GM12878 (cell line): ENCODE measurements at regions of chr22 and their contacts with region 1.

Region 1: DNA sequence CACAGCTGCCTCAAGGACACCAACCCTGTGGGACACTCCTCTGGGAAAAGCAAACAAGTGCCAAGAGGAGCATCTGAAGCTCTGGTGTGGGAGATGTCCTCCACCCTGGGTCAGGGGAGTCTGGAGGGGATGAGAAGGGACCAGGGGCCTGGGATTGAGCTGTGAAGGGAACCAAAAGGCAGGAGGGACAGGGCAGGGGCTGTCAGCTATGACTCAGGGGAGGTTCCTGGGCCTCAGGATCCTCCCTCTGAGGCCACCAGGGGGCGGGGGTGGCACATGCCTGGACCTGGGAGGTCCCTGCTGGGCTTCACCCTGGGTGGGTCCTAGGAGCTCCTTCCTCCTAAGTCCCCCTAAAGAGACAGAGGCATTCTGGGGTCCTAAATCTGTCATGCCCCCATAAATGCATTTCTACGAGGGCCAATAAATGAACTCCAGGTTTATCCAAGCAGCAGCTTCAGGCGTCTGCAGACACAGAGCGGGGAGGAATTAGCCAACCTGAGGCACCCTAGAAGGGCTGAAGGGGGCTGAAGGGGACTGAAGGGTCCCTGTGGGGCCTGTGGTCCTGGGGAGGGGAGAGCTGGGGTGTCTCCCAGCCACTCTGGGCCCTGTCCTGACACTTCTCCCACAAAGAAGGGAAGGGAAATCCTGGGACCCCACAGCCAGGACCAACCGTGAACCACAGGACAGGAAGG is 31.9 kb upstream of the IGLL5 start:
- DNase-seq: no peak
- ATAC-seq: peak; percentile 95
- H3K4me3 ChIP-seq: no peak overlapping the region
- H3K27ac ChIP-seq: peak overlapping the region; percentile 73
- H3K4me1 ChIP-seq: no peaks in the 10 kb centered on the region
- H3K27me3 ChIP-seq: no peaks in the 10 kb centered on the region
- CTCF ChIP-seq: peak; percentile 27 to 70 (median 60); a peak in 5 of 6 replicates
- EP300 ChIP-seq: no peak
- POLR2A ChIP-seq: no peak
- RAD21 ChIP-seq: no peak

Region 2: GRCh38 chr22:22779213-22779612 is 76.5 kb before region 1 on chr22:
- CTCF ChIA-PET with region 1: no interaction called
- POLR2A ChIA-PET with region 1: no interaction called
- RAD21 ChIA-PET with region 1: no interaction called
- SMC1A ChIA-PET with region 1: no interaction called
- in situ Hi-C with region 1: no loop called
- intact Hi-C with region 1: no loop called
- DNase-seq: no peak
- ATAC-seq: no peak
- H3K4me3 ChIP-seq: no peak overlapping the region
- H3K27ac ChIP-seq: no peak overlapping the region
- H3K4me1 ChIP-seq: no peaks in the 10 kb centered on the region
- H3K27me3 ChIP-seq: no peaks in the 10 kb centered on the region
- CTCF ChIP-seq: no peak
- EP300 ChIP-seq: no peak
- POLR2A ChIP-seq: no peak
- RAD21 ChIP-seq: no peak

Region 3: GRCh38 chr22:22870577-22871404 is 15.0 kb after region 1 on chr22:
- CTCF ChIA-PET with region 1: no interaction called
- POLR2A ChIA-PET with region 1: no interaction called
- RAD21 ChIA-PET with region 1: no interaction called
- SMC1A ChIA-PET with region 1: no interaction called
- in situ Hi-C with region 1: no loop called
- intact Hi-C with region 1: no loop called
- DNase-seq: no peak
- ATAC-seq: no peak
- H3K4me3 ChIP-seq: no peak overlapping the region
- H3K27ac ChIP-seq: no peak overlapping the region
- H3K4me1 ChIP-seq: no peaks in the 10 kb centered on the region
- H3K27me3 ChIP-seq: no peaks in the 10 kb centered on the region
- CTCF ChIP-seq: no peak
- EP300 ChIP-seq: no peak
- POLR2A ChIP-seq: no peak
- RAD21 ChIP-seq: no peak

Region 4: DNA sequence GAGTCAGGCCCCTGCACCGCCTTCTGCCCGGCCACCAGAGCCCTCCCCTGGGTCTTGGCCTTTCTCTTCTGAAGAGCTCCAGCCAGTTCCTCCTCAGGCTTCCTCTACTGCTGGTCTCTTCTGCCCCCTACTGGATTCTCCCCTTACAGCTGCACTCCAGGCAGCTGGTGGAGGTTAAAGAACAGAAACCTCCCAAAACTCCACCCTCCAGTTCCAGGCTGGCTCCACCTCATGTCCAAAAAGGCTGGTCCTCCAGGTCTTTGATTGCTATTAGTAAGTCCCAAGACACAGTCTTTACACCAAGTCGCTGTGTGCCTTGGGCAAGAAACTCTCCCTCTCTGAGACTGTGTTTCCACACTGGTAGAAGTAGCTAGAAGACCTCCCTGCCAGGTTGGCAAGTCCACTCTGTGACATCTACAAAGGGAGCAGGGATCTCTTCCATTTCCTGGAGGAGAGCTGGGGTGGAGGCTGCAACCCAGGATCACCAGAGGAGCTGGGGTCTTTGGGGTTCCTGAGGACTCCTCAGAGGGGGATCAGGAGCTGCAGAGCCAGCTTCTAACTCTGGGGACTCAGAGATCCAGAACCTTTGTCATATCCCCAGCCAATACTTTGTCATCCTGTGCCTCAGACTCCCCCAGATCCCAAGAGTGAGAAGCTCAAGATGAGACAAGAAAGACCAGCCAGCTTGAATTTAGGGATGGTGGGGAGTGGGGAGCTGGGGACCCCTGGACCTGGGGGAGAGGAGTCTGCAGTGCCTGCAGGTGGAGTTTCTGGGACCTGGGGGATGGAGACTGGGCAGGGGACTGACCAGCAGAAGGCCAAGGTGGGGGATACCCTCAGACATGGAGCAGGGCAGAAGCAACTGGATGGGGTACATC is 28.5 kb after region 1 on chr22:
- CTCF ChIA-PET with region 1: no interaction called
- POLR2A ChIA-PET with region 1: no interaction called
- RAD21 ChIA-PET with region 1: no interaction called
- SMC1A ChIA-PET with region 1: no interaction called
- in situ Hi-C with region 1: no loop called
- intact Hi-C with region 1: no loop called
- DNase-seq: no peak
- ATAC-seq: no peak
- H3K4me3 ChIP-seq: no peak overlapping the region
- H3K27ac ChIP-seq: no peak overlapping the region
- H3K4me1 ChIP-seq: no peaks in the 10 kb centered on the region; the same call in 1 of the 2 replicates
- H3K27me3 ChIP-seq: no peaks in the 10 kb centered on the region
- CTCF ChIP-seq: no peak; a peak in 1 of 6 replicates
- EP300 ChIP-seq: no peak
- POLR2A ChIP-seq: no peak
- RAD21 ChIP-seq: no peak

Region 5: GRCh38 chr22:22928666-22929380 is 73.1 kb after region 1 on chr22:
- CTCF ChIA-PET with region 1: interaction called, 551 read pairs
- POLR2A ChIA-PET with region 1: interaction called, 125 read pairs
- RAD21 ChIA-PET with region 1: interaction called, 255 read pairs
- SMC1A ChIA-PET with region 1: interaction called, 56 read pairs
- in situ Hi-C with region 1: no loop called
- intact Hi-C with region 1: no loop called
- DNase-seq: peak; percentile 99
- ATAC-seq: peak; percentile 87
- H3K4me3 ChIP-seq: peak overlapping the region; percentile 14; the same call in 1 of the 2 replicates
- H3K27ac ChIP-seq: peak overlapping the region; percentile 99
- H3K4me1 ChIP-seq: peaks cover 81% of the 10 kb centered on the region
- H3K27me3 ChIP-seq: no peaks in the 10 kb centered on the region
- CTCF ChIP-seq: no peak
- EP300 ChIP-seq: peak; percentile 86 to 89; a peak in 3 of 4 replicates
- POLR2A ChIP-seq: peak; percentile 88
- RAD21 ChIP-seq: peak; percentile 27; the same call in 1 of the 2 replicates

Region 6: DNA sequence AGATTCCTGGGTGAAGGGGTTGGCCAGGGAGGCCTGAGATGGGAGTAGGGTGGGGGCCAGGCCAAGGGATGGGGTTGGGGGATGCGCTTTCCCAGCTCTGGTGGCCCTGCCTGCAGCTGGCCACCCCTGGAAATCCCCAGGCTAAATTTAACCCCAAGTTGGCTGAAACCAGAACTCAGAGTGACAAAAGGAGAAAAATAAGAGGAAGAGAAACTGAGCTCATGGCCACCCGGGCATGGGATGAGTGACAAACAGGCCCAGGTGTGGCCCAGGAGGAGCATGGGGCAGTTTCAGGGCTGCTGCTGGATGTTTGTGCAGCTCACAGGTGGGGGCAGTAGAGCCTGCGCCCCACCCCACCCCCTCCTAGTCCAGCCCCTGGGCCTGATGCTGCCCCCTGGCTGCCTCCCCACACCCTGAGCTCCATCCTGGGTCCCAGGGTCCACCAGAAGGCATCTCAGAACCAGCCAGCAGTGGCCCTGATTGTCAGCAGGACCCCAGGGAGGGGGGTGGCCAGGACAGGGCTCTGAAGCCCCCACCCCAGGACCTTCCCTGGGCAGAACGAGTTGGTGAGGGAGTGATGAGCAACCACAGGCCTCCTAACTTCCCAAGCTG is 79.9 kb after region 1 on chr22:
- CTCF ChIA-PET with region 1: interaction called, 551 read pairs
- POLR2A ChIA-PET with region 1: interaction called, 125 read pairs
- RAD21 ChIA-PET with region 1: interaction called, 255 read pairs
- SMC1A ChIA-PET with region 1: interaction called, 141 read pairs
- in situ Hi-C with region 1: loop called (anchors 5 kb)
- intact Hi-C with region 1: loop called (anchors 1 kb)
- DNase-seq: peak; percentile 99
- ATAC-seq: peak; percentile 84
- H3K4me3 ChIP-seq: peak overlapping the region; percentile 24; the same call in 1 of the 2 replicates
- H3K27ac ChIP-seq: peak overlapping the region; percentile 99
- H3K4me1 ChIP-seq: peaks cover 92% of the 10 kb centered on the region
- H3K27me3 ChIP-seq: no peaks in the 10 kb centered on the region
- CTCF ChIP-seq: peak; percentile 53 to 83 (median 71)
- EP300 ChIP-seq: peak; percentile 100
- POLR2A ChIP-seq: no peak; the same call in 1 of the 2 replicates
- RAD21 ChIP-seq: peak; percentile 75

Region 7: DNA sequence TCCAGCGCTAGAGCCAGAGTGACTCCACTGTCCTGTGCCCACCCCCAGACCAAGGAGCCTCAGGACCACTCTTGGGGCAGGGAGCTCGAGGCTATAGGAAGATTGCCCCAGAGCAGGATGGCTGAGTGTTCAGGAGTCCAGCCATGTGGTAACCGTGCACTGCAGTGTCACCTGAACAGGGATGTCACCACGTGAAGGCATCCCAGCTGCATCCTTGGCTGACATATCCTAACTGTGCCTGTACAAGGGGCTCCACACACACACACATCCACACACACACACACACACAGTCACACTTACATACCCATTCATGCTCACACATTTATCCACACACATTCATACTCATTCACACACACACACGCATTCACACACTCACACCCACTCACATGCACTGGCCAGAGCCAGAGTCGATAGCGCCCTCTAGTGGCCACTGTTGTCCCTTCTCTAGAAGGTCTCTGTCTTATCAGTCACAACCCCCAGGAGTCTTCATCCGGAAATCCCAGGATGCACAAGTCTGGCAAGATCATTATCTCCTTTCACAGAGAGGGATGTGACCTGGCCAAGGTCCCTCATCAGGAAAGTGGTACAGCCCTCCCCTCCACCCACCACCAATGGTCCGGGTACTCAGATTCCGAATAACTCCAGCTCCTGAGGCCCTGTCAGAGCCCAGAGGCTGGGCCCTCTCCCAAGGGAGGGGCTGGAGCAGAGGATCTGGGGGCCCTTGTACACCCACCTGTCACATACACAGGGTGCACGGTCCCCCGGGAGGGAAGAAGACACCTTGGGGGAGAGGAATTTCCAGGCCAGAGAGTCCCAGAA is 87.0 kb after region 1 on chr22:
- CTCF ChIA-PET with region 1: interaction called, 551 read pairs
- POLR2A ChIA-PET with region 1: interaction called, 25 read pairs
- RAD21 ChIA-PET with region 1: interaction called, 255 read pairs
- SMC1A ChIA-PET with region 1: interaction called, 141 read pairs
- in situ Hi-C with region 1: loop called (anchors 5 kb)
- intact Hi-C with region 1: no loop called
- DNase-seq: peak; percentile 78
- ATAC-seq: peak; percentile 89
- H3K4me3 ChIP-seq: no peak overlapping the region
- H3K27ac ChIP-seq: peak overlapping the region; percentile 92
- H3K4me1 ChIP-seq: peaks cover 90% of the 10 kb centered on the region
- H3K27me3 ChIP-seq: no peaks in the 10 kb centered on the region
- CTCF ChIP-seq: peak; percentile 84 to 96 (median 87)
- EP300 ChIP-seq: 0 out of 4 replicates have a peak, but pooled peaks of 1 of the 2 experiments have one; percentile 61
- POLR2A ChIP-seq: no peak; the same call in 1 of the 2 replicates
- RAD21 ChIP-seq: peak; percentile 94

Region 8: DNA sequence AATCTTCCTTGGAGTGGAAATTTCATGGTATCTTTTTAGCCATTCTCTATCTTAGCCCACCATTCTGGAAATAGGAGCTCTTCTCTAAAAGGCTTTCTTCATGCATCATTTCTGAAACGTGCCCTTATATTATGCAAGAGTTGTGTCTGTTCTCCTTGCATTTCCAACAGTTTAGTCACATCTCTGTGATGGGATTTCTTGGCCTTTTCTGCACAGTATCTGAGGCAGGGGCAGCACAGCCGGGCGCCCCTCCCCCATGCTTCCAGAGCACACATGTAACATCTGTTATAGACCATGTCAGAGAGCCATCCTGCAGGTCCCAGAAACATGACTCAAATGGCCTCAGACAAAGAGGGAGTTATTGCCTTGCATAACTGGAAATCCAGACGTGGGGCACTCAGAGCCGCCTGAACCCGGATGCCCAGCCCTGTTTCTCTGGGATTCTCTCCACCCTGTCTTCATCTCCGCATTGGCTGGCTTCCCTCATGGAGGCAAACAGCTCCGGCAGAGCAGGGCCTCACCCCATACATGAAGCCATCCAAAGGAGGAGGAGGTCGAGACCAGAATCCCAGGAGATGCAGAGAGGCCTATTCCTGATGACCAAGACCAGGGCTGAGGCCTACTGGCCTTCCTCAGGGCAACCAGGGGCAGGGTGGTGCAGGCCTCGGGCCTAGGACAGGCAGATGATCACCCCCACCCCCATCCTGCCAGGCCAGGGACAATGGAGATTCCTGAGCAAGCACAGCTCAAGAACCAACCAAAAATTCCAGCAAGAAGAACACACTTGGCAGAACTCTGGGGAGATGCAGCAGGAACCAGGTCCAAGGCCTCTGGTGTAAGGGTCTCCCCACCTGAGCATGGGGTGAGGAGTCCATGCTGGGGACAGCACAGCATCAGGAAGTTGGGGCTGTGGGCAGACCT is 93.1 kb after region 1 on chr22:
- CTCF ChIA-PET with region 1: interaction called, 551 read pairs
- POLR2A ChIA-PET with region 1: interaction called, 9 read pairs
- RAD21 ChIA-PET with region 1: interaction called, 255 read pairs
- SMC1A ChIA-PET with region 1: interaction called, 201 read pairs
- in situ Hi-C with region 1: loop called (anchors 5 kb)
- intact Hi-C with region 1: no loop called
- DNase-seq: no peak
- ATAC-seq: no peak
- H3K4me3 ChIP-seq: no peak overlapping the region
- H3K27ac ChIP-seq: no peak overlapping the region
- H3K4me1 ChIP-seq: peaks cover 34% of the 10 kb centered on the region
- H3K27me3 ChIP-seq: no peaks in the 10 kb centered on the region
- CTCF ChIP-seq: no peak
- EP300 ChIP-seq: no peak
- POLR2A ChIP-seq: no peak
- RAD21 ChIP-seq: no peak

Region 9: GRCh38 chr22:22974795-22975580 is 119.2 kb after region 1 on chr22:
- CTCF ChIA-PET with region 1: no interaction called
- POLR2A ChIA-PET with region 1: no interaction called
- RAD21 ChIA-PET with region 1: no interaction called
- SMC1A ChIA-PET with region 1: no interaction called
- in situ Hi-C with region 1: no loop called
- intact Hi-C with region 1: no loop called
- DNase-seq: no peak
- ATAC-seq: no peak
- H3K4me3 ChIP-seq: no peak overlapping the region
- H3K27ac ChIP-seq: no peak overlapping the region
- H3K4me1 ChIP-seq: no peaks in the 10 kb centered on the region
- H3K27me3 ChIP-seq: no peaks in the 10 kb centered on the region; a peak in 1 of 4 replicates
- CTCF ChIP-seq: no peak
- EP300 ChIP-seq: no peak
- POLR2A ChIP-seq: no peak
- RAD21 ChIP-seq: no peak

Region 10: DNA sequence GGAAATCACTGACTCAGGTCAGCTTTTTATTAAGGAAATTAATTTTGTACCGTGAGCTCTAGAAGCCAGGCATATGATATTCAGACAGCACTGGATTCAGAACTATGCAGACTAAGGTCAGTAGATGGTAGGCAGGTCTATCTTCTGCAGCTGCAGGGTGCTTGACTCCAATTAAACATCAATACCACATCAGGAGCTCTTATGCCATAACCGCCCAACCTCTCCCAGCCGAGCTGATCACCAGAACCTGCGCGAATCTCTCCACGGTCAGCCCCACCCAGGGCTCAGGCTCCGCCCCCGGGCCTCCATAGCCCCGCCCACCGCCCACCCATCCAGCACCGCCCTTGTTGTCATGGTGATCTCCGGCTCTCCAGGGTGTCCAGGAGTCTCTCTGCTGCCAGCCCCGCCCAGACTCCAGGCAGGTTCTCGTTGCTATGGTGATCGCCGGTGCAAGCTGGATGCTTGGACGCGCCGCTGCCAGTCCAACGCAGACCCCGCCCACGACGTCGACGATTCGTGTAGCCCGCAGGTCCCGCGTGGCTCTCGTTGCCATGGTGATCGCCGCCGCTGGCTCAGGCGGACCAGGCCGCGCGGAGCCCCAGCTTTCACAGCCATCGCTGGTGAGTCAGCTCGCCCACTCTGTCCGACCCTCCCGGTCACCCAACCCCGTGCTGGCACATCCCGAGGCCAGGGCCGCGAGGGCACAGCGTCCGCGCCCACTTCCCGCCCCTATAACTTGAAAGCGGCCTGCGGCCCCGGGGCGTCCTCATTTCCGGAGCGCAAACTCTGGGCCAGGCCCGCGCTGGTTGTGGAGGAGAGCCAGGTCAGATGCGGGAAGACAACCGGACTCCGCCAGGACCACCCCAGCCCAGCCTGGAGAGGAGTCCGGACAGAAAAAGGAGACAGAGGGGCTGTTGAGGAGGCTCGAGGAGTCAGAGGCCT is 289.4 kb after region 1 on chr22 and contains the start of gene RAB36:
- CTCF ChIA-PET with region 1: interaction called, 4 read pairs
- POLR2A ChIA-PET with region 1: interaction called, 3 read pairs
- RAD21 ChIA-PET with region 1: no interaction called
- SMC1A ChIA-PET with region 1: no interaction called
- in situ Hi-C with region 1: no loop called
- intact Hi-C with region 1: loop called (anchors 10 kb)
- DNase-seq: peak; percentile 77
- ATAC-seq: peak; percentile 73
- H3K4me3 ChIP-seq: peak within 1 kb of the TSS; percentile 43
- H3K27ac ChIP-seq: no peak within 1 kb of the TSS
- H3K4me1 ChIP-seq: peaks cover 41% of the 10 kb centered on the region
- H3K27me3 ChIP-seq: no peaks in the 10 kb centered on the region
- CTCF ChIP-seq: no peak
- EP300 ChIP-seq: no peak
- POLR2A ChIP-seq: no peak
- RAD21 ChIP-seq: no peak
- polyA plus RNA-seq, gene RAB36: 0.45 to 0.46 TPM